Activated T-helper 1 cell treated with anti-CD3 and anti-CD28 coated beads, Interleukin-12 subunit alpha, Interleukin-12 subunit beta, Interleukin-2, Interleukin-4 antibody, amounts not matched to agents 30 ng/mL and 10 ng/mL and 1 ng/mL, durations not matched to agents 14 hours and 24 hours and 36 hours (primary cell): ENCODE measurements at regions of chr2 and their contacts with region 1.

Region 1: DNA sequence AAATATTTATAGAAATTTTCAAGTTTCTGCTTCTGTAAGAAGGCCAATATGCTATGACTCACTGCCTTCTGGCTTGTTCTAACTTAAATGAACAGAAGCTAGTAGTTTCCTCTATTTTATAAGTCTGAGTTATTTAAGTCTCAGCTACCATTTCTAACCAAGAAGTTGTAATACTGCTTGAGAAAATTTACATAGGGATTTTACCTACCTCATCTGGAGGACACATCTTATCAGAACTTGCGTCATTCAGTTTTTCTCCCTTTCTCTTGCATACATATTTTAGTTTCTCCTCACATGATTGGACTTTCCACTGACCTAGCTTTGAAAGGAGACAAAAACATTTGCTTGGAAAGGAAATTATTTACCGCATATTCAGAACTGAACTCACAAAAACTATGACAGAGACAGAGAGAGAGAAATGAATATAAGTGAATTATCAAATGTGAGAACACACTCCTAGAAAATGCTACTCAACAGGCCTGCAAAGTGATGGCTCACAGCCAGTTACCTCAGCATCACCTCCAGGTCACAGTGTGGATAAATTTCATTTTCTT is 81.1 kb upstream of the CD302 start:
- DNase-seq: no peak
- H3K4me3 Mint-ChIP-seq: no peak overlapping the region
- H3K27ac Mint-ChIP-seq: peak overlapping the region; percentile 86
- H3K4me1 Mint-ChIP-seq: peaks cover 32% of the 10 kb centered on the region
- H3K27me3 Mint-ChIP-seq: no peaks in the 10 kb centered on the region

Region 2: DNA sequence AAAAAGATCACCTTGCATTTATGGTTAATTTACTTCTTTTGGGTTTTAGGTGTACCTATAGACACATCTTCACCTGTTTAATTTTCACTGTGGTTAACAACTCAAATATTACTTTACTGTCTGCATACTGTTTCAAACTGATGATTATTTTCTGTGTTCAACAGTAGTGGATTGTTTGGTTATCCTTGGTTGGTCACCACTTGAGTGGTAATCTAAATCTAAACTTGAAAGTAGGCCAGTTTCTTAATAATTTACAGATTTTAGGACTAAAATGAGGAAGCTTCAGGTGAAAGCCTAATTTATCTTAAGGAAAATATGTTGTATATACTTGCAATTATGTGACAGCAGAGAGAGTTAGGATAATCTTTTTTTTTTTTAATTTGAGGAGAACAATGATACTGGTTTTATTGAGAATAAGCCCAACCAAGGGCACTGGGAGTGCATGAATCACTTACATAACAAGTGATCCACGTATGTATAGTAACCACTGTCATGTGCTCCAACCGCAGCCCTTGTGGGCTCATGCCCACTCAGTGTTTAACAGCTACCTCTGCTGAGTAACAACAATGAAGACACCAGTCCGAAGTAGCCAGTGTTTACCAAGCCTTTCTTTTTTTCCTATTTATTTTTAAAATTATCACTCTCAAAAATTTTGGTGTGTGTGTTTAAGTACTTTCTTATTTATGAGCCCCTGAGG is 561.6 kb before region 1 on chr2:
- intact Hi-C with region 1: no loop called
- DNase-seq: no peak
- H3K4me3 Mint-ChIP-seq: no peak overlapping the region
- H3K27ac Mint-ChIP-seq: no peak overlapping the region
- H3K4me1 Mint-ChIP-seq: no peaks in the 10 kb centered on the region
- H3K27me3 Mint-ChIP-seq: no peaks in the 10 kb centered on the region

Region 3: DNA sequence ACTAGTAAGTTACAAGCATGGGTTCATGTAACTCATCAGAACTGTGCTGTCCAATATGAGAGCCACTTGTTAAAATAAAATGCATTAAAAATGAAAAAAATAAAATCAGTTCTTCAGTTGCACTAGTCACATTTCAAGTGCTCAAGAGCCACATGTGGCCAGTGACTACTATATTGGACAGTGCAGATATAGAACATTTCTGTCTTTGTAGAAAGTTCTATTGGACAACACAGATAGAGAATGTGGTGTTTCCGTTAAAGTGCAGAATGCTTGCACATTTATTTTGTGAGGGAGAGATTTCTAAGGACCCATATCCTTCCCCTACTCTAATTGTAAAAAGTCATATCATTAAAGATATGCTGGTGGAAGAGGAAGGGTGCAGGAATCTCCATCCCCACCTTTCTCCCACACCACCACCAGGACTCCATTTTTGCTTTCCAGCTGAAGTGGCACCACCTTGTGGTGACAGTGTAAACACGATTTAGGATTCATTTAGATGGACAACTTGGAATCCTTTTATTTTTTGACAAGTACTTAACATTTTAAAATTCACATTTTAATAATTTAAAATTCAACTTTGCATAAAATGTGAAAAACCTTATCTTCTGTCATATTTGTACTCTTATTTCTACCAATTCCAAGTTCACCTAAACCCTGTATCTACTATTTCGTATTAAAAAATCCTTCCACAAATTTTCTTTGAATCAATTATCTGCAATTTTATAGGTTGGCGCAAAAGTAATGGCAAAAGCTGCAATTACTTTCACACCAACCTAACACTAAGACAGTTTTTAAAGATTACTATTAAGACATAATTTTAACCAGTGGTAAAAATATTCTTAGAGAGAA is 71.7 kb before region 1 on chr2:
- intact Hi-C with region 1: loop called (anchors 5 kb)
- DNase-seq: no peak
- H3K4me3 Mint-ChIP-seq: no peak overlapping the region
- H3K27ac Mint-ChIP-seq: no peak overlapping the region
- H3K4me1 Mint-ChIP-seq: no peaks in the 10 kb centered on the region
- H3K27me3 Mint-ChIP-seq: no peaks in the 10 kb centered on the region

Region 4: GRCh38 chr2:159895258-159896065 is 16.3 kb after region 1 on chr2:
- intact Hi-C with region 1: loop called (anchors 1 kb)
- DNase-seq: no peak
- H3K4me3 Mint-ChIP-seq: no peak overlapping the region
- H3K27ac Mint-ChIP-seq: peak overlapping the region; percentile 80
- H3K4me1 Mint-ChIP-seq: peaks cover 41% of the 10 kb centered on the region
- H3K27me3 Mint-ChIP-seq: no peaks in the 10 kb centered on the region

Region 5: GRCh38 chr2:159921752-159922404 is 42.8 kb after region 1 on chr2:
- intact Hi-C with region 1: loop called (anchors 1 kb)
- DNase-seq: peak; percentile 52
- H3K4me3 Mint-ChIP-seq: no peak overlapping the region
- H3K27ac Mint-ChIP-seq: no peak overlapping the region
- H3K4me1 Mint-ChIP-seq: peaks cover 19% of the 10 kb centered on the region
- H3K27me3 Mint-ChIP-seq: peaks cover 3% of the 10 kb centered on the region

Region 6: GRCh38 chr2:160043265-160043664 is 164.1 kb after region 1 on chr2:
- intact Hi-C with region 1: loop called (anchors 5 kb)
- DNase-seq: no peak
- H3K4me3 Mint-ChIP-seq: no peak overlapping the region
- H3K27ac Mint-ChIP-seq: no peak overlapping the region
- H3K4me1 Mint-ChIP-seq: peaks cover 8% of the 10 kb centered on the region
- H3K27me3 Mint-ChIP-seq: peaks cover 9% of the 10 kb centered on the region